Stomach (tissue), 19 donors: ENCODE measurements at regions of chr3 and their contacts with region 1.

Region 1: DNA sequence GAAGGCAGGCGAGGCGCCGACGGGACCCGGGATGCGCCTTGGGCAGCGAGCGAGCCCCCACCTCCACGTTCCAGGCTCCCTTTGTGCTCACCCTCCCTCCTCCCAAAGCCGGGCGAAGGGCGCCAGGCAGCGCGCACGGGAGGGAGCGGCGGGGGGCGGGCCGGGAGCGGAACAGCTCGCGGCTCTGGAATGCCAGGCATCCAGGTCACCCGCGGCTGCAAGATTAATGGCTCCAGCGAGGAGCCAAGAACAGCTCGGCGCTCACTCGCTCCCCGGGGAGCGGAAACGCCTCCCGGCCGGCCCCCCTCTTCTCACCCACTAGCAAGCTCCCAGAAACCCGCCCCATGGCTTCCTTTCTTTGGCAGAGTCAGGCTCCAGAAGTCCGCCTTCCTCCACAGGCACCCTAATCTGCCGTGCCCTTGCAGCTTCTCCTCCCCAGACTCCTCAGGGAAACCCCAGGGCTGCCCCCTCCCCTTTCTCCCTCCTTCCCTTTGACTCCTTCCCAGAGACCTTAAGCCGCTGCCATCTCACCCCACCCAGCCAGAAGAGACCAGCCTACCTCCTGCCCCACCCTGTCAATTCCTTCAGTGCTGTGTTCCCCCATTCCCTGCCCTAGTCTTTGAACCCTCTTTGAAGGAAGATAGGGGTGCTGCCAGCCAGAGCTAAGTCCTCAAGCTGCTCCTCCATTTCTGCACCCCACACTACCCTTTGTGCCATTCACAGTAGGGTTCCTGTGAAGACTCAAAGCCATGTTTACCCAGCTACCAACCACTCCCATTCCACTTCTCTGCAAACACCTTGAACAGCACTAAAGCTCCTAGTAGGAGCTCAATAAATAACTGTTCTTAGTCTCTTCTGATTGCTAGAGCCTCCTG is 9.9 kb downstream of the AMOTL2 start:
- DNase-seq: peak; percentile 94 to 97
- H3K4me3 ChIP-seq: peak overlapping the region; percentile 21 to 38 (median 28)
- H3K27ac ChIP-seq: peak overlapping the region; percentile 89 to 100 (median 98)
- H3K4me1 ChIP-seq: peaks cover 92 to 100% (median 98%) of the 10 kb centered on the region in 4 donors
- H3K27me3 ChIP-seq: no peaks in the 10 kb centered on the region
- CTCF ChIP-seq: no peak
- EP300 ChIP-seq: peak; percentile 8
- POLR2A ChIP-seq: no peak

Region 2: GRCh38 chr3:134161898-134162615 is 202.2 kb before region 1 on chr3:
- intact Hi-C with region 1: no loop called
- DNase-seq: no peak
- H3K4me3 ChIP-seq: no peak overlapping the region
- H3K27ac ChIP-seq: no peak overlapping the region
- H3K4me1 ChIP-seq: no peaks in the 10 kb centered on the region
- H3K27me3 ChIP-seq: no peaks in the 10 kb centered on the region
- CTCF ChIP-seq: no peak
- EP300 ChIP-seq: no peak
- POLR2A ChIP-seq: no peak

Region 3: GRCh38 chr3:134315286-134316106 is 48.8 kb before region 1 on chr3:
- intact Hi-C with region 1: loop called (anchors 5 kb)
- DNase-seq: no peak
- H3K4me3 ChIP-seq: no peak overlapping the region
- H3K27ac ChIP-seq: peak overlapping the region; percentile 34 to 93 (median 91)
- H3K4me1 ChIP-seq: peaks cover 36 to 59% (median 49%) of the 10 kb centered on the region in 4 donors
- H3K27me3 ChIP-seq: peaks cover 0 to 19% (median 5%) of the 10 kb centered on the region in 3 donors
- CTCF ChIP-seq: no peak
- EP300 ChIP-seq: no peak
- POLR2A ChIP-seq: no peak

Region 4: GRCh38 chr3:134627836-134628235 is 263.5 kb after region 1 on chr3:
- intact Hi-C with region 1: no loop called
- DNase-seq: peak; percentile 27 to 67
- H3K4me3 ChIP-seq: no peak overlapping the region
- H3K27ac ChIP-seq: peak overlapping the region in 1 of 5 donors; percentile 36
- H3K4me1 ChIP-seq: no peaks in the 10 kb centered on the region
- H3K27me3 ChIP-seq: no peaks in the 10 kb centered on the region
- CTCF ChIP-seq: no peak
- EP300 ChIP-seq: no peak
- POLR2A ChIP-seq: no peak